ENCODE measurements at regions of chr19 and their contacts with region 1.

Region 1: DNA sequence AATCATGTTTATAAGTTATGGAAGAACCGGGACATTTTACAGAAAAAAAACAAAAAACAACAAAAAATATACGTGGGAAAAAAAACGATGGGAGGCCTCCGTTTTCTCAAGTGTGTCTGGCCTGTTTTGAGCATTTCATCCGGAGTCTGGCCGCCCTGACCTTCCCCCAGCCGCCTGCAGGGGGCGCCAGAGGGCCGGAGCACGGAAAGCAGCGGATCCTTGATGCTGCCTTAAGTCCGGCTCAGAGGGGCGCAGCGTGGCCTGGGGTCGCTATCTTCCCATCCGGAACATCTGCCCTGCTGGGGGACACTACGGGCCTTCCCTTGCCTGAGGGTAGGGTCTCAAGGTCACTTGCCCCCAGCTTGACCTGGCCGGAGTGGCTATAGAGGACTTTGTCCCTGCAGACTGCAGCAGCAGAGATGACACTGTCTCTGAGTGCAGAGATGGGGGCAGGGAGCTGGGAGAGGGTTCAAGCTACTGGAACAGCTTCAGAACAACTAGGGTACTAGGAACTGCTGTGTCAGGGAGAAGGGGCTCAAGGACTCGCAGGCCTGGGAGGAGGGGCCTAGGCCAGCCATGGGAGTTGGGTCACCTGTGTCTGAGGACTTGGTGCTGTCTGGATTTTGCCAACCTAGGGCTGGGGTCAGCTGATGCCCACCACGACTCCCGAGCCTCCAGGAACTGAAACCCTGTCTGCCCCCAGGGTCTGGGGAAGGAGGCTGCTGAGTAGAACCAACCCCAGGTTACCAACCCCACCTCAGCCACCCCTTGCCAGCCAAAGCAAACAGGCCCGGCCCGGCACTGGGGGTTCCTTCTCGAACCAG is 1.8 kb upstream of the APOE start:
- DNase-seq: peak; percentile 68 to 96
- H3K4me3 ChIP-seq: no peak overlapping the region
- CTCF ChIP-seq: peak in 2 of 3 donors; percentile 81 to 96
- POLR2A ChIP-seq: no peak

Region 2: GRCh38 chr19:44954824-44955586 is 51.2 kb after region 1 on chr19 and contains the start of gene CLPTM1:
- intact Hi-C with region 1: loop called (anchors 5 kb)
- DNase-seq: peak; percentile 94 to 99
- H3K4me3 ChIP-seq: peak within 1 kb of the TSS; percentile 78
- CTCF ChIP-seq: peak in 1 of 3 donors; percentile 13
- POLR2A ChIP-seq: peak in 1 of 2 donors; percentile 29
- total RNA-seq, gene CLPTM1: 78.5 to 103 (median 94.2) TPM

Region 3: GRCh38 chr19:45323671-45324081 is 419.9 kb after region 1 on chr19:
- intact Hi-C with region 1: loop called (anchors 10 kb)
- DNase-seq: no peak
- H3K4me3 ChIP-seq: no peak overlapping the region
- CTCF ChIP-seq: no peak
- POLR2A ChIP-seq: no peak

Measured in lower leg skin (tissue), 4 donors.